SK-N-SH (cell line): ENCODE measurements at regions of chr20 and their contacts with region 1.

Region 1: DNA sequence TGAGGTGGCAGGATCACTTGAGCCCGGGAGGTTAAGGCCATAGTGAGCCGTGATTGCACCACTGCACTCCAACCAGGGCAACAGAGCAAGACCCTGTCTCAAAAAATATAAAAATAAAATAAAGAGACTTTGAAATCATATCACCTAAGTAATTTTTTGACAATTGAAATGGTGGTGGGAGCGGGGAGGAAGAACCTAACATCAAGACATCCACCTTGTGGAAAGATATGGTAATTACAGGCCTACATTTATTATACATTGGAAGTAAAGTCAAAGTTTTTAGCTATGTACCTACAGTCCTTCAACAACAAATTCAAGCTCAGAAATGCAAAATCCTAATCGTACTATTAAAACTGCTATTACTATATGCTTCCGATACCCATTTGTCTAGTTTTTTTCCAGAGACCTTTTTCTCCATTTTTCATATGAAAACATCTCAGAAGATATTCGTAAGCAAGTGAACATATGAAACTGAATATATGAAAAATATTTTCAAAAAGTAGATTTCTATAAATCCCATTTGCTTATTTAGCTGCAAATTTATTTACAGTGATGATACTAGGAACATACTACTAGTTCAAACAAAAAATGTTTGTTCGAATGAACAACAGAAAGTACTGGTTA is 83.3 kb downstream of the SYCP2 start:
- DNase-seq: no peak
- H3K4me3 ChIP-seq: no peak overlapping the region
- H3K27ac ChIP-seq: no peak overlapping the region
- H3K4me1 ChIP-seq: no peaks in the 10 kb centered on the region
- H3K27me3 ChIP-seq: no peaks in the 10 kb centered on the region
- CTCF ChIP-seq: peak; percentile 69
- EP300 ChIP-seq: no peak
- RAD21 ChIP-seq: peak; percentile 78

Region 2: DNA sequence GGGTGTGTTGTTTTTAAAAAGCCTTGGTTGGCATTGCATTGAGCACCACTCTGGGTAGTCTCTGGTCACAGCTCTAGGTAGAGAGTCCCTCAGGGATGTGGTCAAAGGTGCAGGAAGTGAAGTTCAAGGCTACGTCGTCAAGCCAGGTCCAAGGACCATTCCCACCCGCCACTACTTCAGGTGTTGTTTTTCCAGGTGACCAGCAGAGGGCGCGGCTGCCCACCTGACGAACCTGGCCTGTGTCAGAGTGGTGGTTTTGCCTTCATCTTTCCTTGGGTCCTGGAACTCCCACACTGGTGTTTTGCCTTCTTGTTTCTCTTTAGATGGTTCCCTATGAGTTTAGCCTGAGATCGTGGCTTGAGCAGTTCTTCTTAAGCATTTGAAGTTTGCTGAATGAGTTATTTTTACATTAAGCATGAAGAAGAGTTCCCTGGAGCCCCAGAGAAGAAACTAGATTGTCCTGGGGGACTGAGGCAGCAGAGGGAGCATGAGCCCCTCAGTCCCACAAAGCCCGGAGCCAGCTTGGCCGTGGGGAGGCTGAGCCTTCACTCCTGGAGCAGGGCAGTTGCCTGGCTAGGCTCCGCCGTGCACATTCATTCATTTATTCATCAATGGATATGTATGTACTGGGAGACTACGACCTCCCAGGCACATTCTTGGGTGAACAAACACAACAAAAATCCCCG is 251.4 kb before region 1 on chr20:
- CTCF ChIA-PET with region 1: interaction called, 43 read pairs
- POLR2A ChIA-PET with region 1: no interaction called
- DNase-seq: peak; percentile 85
- H3K4me3 ChIP-seq: no peak overlapping the region; a peak in 1 of 4 replicates
- H3K27ac ChIP-seq: no peak overlapping the region
- H3K4me1 ChIP-seq: no peaks in the 10 kb centered on the region; a peak in 1 of 4 replicates
- H3K27me3 ChIP-seq: no peaks in the 10 kb centered on the region; the same call in 1 of the 2 replicates
- CTCF ChIP-seq: peak; percentile 73
- EP300 ChIP-seq: no peak
- RAD21 ChIP-seq: peak; percentile 89

Region 3: DNA sequence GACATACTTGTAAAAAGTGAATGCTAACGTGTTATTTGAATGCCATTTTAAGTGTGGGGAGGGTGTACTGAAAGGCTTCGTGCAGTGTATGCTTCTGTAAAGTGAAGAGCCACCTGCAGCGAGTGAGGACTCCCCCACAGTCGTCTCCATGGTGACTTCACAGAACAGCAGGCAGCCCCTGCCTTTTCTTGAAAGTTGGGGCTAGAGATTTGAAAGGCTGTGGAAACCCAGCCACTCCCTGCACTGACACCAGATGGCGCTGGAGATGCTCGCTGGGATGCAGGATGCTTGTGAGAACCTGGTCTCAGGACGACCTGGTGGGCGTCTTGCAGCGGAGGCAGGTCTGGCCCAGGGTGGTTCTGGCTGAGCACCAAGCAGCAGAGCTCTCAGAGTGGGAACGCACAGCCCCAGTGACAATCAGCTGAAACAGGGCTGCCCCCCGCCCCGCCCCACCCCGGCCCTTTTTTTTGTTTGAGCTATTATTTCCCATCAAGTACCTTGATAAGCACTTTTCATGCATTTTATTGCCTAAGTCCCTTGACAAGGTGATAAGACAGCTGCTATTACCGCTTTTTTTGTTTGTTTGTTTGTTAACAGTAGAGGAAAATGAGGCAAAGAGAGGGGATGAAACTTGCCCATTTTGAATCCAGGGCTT is 67.0 kb before region 1 on chr20:
- CTCF ChIA-PET with region 1: interaction called, 170 read pairs
- POLR2A ChIA-PET with region 1: no interaction called
- DNase-seq: peak; percentile 82
- H3K4me3 ChIP-seq: no peak overlapping the region; a peak in 1 of 4 replicates
- H3K27ac ChIP-seq: no peak overlapping the region
- H3K4me1 ChIP-seq: no peaks in the 10 kb centered on the region; a peak in 1 of 4 replicates
- H3K27me3 ChIP-seq: no peaks in the 10 kb centered on the region
- CTCF ChIP-seq: peak; percentile 55
- EP300 ChIP-seq: no peak
- RAD21 ChIP-seq: peak; percentile 81

Region 4: DNA sequence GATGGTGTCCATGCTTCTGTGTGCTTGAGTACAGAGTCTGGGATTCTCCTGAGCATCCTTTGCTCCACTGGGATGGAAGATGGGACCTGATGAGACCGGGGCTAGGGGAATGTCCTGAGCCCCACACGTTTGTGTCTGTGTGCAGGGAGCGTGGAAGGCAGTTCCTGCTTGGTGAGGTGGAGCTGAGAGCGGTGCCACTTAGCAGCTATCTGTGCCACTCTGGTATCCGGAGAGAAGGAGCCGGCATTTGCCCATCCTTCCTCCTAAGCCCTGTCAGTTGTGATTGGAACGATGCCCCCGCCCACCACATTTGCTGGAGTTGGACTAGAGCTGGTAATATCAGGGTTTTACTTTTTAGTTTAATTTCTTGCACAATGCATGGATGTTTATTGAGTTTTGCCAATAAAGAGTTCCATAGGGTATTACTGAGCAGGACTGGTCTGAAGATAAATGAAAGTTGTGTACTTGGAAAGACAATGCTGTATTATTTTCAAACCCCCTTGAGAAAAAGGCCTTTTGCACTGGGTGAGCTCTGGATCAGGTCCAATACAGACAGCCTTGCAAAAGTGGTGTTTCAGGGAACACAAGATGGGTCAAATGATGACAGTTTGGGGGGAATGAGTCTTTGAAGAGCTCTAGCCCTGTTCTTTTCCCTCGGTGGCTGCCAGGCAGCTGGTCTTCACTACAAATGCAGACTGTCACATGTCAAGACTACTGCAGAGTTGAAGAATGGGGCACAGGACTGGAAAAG is 47.5 kb before region 1 on chr20:
- CTCF ChIA-PET with region 1: interaction called, 12 read pairs
- POLR2A ChIA-PET with region 1: no interaction called
- DNase-seq: peak; percentile 2
- H3K4me3 ChIP-seq: no peak overlapping the region
- H3K27ac ChIP-seq: no peak overlapping the region
- H3K4me1 ChIP-seq: no peaks in the 10 kb centered on the region
- H3K27me3 ChIP-seq: no peaks in the 10 kb centered on the region
- CTCF ChIP-seq: no peak
- EP300 ChIP-seq: no peak
- RAD21 ChIP-seq: no peak

Region 5: GRCh38 chr20:59835448-59836395 is 14.4 kb before region 1 on chr20:
- CTCF ChIA-PET with region 1: interaction called, 111 read pairs
- POLR2A ChIA-PET with region 1: no interaction called
- DNase-seq: peak; percentile 72
- H3K4me3 ChIP-seq: peak overlapping the region; percentile 31 to 45; a peak in 3 of 4 replicates
- H3K27ac ChIP-seq: peak overlapping the region in 1 of 2 experiments; percentile 64; a peak in 1 of 4 replicates
- H3K4me1 ChIP-seq: peaks cover 0 to 17% of the 10 kb centered on the region in 2 experiments; a peak in 1 of 4 replicates
- H3K27me3 ChIP-seq: no peaks in the 10 kb centered on the region
- CTCF ChIP-seq: no peak
- EP300 ChIP-seq: no peak
- RAD21 ChIP-seq: no peak